ENCODE measurements at regions of chr7 and their contacts with region 1.

Region 1: DNA sequence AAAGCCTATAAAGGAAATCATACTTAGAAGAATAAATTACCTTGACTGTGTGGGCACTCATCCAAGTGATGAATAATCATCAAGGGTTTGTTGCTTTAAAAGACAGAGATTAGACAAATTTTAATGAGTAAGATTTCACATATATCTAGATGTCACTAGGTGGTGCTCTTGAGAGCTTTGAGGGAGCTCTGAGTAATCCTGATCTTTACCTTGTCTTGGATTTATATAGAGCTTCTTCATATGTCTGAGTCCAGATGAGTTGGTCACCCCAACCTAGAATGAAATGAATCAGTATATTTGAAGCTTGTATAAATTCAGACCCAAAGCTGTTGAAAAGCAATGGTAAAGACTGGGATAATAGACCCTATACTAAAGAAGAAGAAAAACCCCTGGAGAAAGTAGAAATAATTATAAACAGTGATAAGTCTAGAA is 3.7 kb downstream of the AGR2 start:
- DNase-seq: peak; percentile 91
- H3K4me3 Mint-ChIP-seq: no peak overlapping the region
- H3K27ac Mint-ChIP-seq: no peak overlapping the region
- H3K4me1 Mint-ChIP-seq: peaks cover 22% of the 10 kb centered on the region
- H3K27me3 Mint-ChIP-seq: no peaks in the 10 kb centered on the region
- CTCF ChIP-seq: peak; percentile 33

Region 2: DNA sequence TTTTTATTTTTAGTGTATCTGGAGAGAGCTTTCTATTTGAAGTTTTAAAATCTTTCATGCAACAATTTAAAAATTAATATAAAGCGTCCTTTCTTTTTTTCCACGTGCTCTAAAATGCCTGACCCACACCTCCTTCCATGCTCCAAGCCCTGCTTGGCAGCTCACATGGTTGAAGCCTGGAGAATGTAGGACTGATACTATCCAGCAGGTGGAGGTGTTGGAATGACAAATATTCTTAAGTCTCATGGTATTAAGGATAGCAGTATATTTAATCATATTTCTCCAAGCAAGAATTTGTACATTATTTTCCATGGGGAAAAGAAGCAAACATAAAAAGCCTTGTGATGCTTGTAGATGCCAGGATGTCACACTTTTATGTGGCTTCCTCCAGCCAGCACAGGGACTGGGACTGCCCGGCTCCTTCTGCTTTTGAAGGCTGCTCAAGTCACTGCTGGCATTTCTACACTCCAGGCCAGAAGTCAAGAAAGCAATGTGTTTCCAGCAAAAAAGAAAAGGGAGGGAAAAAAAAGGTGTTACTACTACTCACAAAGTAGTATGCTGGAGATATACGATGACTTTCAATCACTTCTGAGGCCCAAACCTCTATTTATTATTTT is 105.4 kb before region 1 on chr7:
- CTCF ChIA-PET with region 1: interaction called, 16 read pairs
- POLR2A ChIA-PET with region 1: no interaction called
- intact Hi-C with region 1: loop called (anchors 2 kb)
- DNase-seq: peak; percentile 65
- H3K4me3 Mint-ChIP-seq: no peak overlapping the region
- H3K27ac Mint-ChIP-seq: no peak overlapping the region
- H3K4me1 Mint-ChIP-seq: no peaks in the 10 kb centered on the region
- H3K27me3 Mint-ChIP-seq: no peaks in the 10 kb centered on the region
- CTCF ChIP-seq: peak; percentile 50

Region 3: DNA sequence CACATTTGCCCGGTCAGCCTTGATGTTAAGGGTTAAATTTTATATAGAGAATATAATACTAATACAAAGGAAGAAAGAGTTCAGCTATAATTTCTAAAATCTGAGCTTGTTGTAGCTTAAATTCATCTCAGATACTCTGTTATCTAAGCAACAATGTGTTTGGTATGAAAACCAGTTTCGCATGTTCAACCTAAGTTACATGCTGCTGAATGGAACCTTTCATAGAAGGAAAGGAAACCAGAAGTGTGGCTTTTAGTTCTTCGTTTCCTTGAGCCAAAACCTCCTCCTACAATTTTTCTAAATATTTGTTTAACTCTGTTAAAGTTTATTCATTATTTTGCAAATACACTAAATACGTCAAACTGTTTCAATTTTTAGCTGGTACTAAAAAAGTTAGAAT is 14.9 kb before region 1 on chr7:
- CTCF ChIA-PET with region 1: interaction called, 15 read pairs
- POLR2A ChIA-PET with region 1: interaction called, 5 read pairs
- intact Hi-C with region 1: no loop called
- DNase-seq: no peak
- H3K4me3 Mint-ChIP-seq: no peak overlapping the region
- H3K27ac Mint-ChIP-seq: no peak overlapping the region
- H3K4me1 Mint-ChIP-seq: no peaks in the 10 kb centered on the region
- H3K27me3 Mint-ChIP-seq: no peaks in the 10 kb centered on the region
- CTCF ChIP-seq: no peak

Region 4: DNA sequence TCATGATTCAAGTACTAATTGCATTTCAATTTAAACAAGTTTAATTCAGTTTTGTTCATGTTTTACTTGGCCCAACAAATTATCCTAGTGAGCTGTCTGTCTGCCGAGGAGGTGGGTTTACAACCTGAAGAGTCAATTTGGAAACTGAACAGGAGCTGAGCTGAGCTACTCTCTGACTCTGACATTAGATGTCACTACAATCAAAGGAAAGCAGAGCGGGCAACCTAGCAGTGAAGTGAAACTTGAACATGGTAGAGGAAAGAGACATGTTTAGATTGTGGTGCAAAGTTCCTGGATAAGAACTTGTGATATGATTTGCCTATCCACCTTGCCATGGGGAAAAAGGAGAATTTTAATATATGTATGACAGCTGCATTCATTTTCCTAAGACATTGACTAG is 90.2 kb after region 1 on chr7:
- CTCF ChIA-PET with region 1: interaction called, 10 read pairs
- POLR2A ChIA-PET with region 1: interaction called, 3 read pairs
- intact Hi-C with region 1: no loop called
- DNase-seq: peak; percentile 74
- H3K4me3 Mint-ChIP-seq: no peak overlapping the region
- H3K27ac Mint-ChIP-seq: no peak overlapping the region
- H3K4me1 Mint-ChIP-seq: peaks cover 5% of the 10 kb centered on the region
- H3K27me3 Mint-ChIP-seq: no peaks in the 10 kb centered on the region
- CTCF ChIP-seq: peak; percentile 68

Region 5: GRCh38 chr7:16918288-16918895 is 117.3 kb after region 1 on chr7:
- CTCF ChIA-PET with region 1: interaction called, 95 read pairs
- POLR2A ChIA-PET with region 1: interaction called, 19 read pairs
- intact Hi-C with region 1: loop called (anchors 1 kb)
- DNase-seq: peak; percentile 47
- H3K4me3 Mint-ChIP-seq: no peak overlapping the region
- H3K27ac Mint-ChIP-seq: no peak overlapping the region
- H3K4me1 Mint-ChIP-seq: peaks cover 48% of the 10 kb centered on the region
- H3K27me3 Mint-ChIP-seq: no peaks in the 10 kb centered on the region
- CTCF ChIP-seq: peak; percentile 69